WTC11 (cell line): ENCODE measurements at regions of chr15 and their contacts with region 1.

Region 1: GRCh38 chr15:49235446-49236124 is 65.5 kb downstream of the GALK2 start:
- DNase-seq: peak; percentile 62
- ATAC-seq: peak; percentile 89
- H3K4me3 Mint-ChIP-seq: no peak overlapping the region
- H3K27ac Mint-ChIP-seq: peak overlapping the region; percentile 15
- H3K4me1 Mint-ChIP-seq: peaks cover 40% of the 10 kb centered on the region
- H3K27me3 Mint-ChIP-seq: no peaks in the 10 kb centered on the region
- CTCF ChIP-seq: peak; percentile 65

Region 2: DNA sequence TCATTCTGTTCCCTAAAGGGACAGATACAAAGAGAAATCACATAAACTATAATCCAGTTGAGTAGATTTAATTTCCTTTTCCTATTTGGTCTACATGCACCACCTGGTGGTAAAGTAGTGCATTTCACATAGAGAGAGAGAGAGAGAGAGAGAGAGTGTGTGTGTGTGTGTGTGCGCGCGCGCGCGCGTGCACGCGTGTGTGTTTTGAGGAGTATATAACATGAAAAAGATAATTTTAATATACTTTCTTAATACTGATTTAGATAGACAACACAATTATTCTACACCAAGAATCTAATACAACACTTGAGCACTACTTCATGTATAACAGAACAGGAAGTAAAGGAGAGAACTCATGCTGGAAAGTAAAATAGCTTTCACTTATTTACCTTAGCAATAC is 186.4 kb after region 1 on chr15:
- CTCF ChIA-PET with region 1: interaction called, 131 read pairs
- POLR2A ChIA-PET with region 1: interaction called, 3 read pairs
- DNase-seq: peak; percentile 52
- ATAC-seq: peak; percentile 55; the same call in 1 of the 2 replicates
- H3K4me3 Mint-ChIP-seq: no peak overlapping the region
- H3K27ac Mint-ChIP-seq: peak overlapping the region; percentile 63; the same call in 1 of the 2 replicates
- H3K4me1 Mint-ChIP-seq: peaks cover 2% of the 10 kb centered on the region
- H3K27me3 Mint-ChIP-seq: no peaks in the 10 kb centered on the region
- CTCF ChIP-seq: peak; percentile 77